Ovary (tissue), 10 donors: ENCODE measurements at regions of chr13 and their contacts with region 1.

Region 1: DNA sequence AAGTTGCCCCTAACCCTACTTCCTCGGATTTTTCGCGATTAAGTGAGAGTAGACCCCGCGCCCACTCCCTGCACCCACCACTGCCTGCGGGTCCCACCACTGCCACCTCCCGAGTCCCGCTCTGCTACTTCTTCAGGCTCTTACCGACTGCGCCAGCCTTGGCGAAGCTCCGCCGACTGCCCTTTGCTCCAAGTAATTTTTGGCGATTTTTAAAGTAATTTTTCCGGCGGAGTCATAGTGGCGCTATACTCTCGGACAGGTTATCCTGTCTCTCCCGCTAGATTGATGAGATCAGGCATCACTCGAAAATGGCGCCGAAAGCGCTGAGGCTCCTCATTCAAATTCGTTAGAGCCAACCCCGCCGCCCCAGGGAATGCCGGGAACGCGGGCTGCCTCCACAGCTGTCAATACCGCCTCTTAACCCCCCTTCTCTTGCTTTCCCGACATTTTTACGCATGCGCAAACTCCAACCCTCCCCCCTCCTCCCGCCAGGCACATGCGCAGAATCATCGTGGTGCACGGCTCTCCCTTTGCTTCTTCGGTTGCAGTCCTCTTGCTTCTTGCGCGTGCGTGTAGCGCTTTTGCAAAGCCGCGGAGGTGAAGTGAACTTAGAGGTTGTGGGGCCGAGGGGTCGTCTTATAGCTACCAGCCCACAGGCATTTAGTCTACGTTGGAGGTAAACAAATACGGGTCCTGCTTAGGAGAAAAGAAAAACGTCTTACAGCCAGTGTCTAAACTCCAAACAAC is 66.6 kb downstream of the KCNRG start:
- DNase-seq: peak; percentile 95 to 98 (median 97)
- H3K4me3 ChIP-seq: peak overlapping the region; percentile 53
- H3K27ac ChIP-seq: peak overlapping the region in 1 of 2 donors; percentile 23
- H3K4me1 ChIP-seq: no peaks in the 10 kb centered on the region
- H3K27me3 ChIP-seq: no peaks in the 10 kb centered on the region
- CTCF ChIP-seq: peak in 1 of 3 donors; percentile 8
- EP300 ChIP-seq: no peak
- POLR2A ChIP-seq: no peak

Region 2: DNA sequence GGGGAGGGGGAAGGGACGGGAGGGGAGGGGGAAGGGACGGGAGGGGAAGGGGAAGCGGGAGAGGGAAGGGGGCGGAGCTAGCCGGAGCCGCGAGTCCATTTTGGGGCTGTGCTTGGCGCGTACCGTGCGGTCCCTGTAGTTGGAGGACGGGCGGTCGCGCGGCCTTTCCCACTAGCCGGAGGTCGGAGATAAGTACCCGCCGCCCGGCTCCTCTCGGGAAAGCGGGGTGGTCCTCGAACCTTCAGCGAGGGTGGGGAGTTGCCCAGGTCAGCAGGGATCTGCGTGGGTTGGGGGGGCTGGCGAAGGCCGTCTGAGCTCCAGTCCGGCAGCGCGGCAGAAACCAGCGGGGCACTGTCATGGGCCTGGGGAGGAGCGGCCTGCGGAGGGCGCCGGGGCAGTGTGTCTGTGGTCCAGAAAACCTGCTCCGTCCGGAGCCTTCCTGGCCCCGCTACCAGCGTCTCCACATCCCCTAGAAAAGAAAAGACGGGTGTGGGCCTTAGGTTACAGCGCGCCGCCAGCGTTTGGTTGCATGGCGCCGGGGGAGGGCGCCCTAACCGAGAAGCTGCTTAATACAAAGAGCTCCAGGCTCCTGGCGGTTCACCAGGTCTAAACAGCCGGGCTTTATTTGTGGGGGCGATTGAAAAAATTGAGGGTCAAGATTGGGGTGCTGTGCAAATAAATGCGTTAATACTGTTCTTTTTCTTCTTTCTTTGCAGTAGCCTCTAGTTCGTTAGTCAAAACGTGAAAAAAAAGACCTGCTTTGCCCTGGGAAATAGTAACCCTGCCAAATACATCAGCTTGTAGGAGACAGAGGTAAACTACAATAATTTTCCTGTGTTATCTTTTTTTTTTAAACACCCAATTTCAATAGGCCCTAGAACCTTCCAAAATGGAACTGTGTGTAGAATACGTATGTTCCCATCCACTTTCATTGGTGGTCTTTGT is 84.6 kb before region 1 on chr13 and contains the start of gene TRIM13:
- intact Hi-C with region 1: loop called in 2 of 4 experiments (anchors 2 to 5 kb)
- DNase-seq: peak; percentile 88 to 93 (median 91)
- H3K4me3 ChIP-seq: peak within 1 kb of the TSS; percentile 90
- H3K27ac ChIP-seq: peak within 1 kb of the TSS; percentile 97 to 98
- H3K4me1 ChIP-seq: peaks cover 3% of the 10 kb centered on the region
- H3K27me3 ChIP-seq: no peaks in the 10 kb centered on the region
- CTCF ChIP-seq: peak; percentile 50 to 71 (median 58)
- EP300 ChIP-seq: no peak
- POLR2A ChIP-seq: peak; percentile 53
- total RNA-seq, gene TRIM13: 14.5 to 27.9 (median 25.5) TPM

Region 3: DNA sequence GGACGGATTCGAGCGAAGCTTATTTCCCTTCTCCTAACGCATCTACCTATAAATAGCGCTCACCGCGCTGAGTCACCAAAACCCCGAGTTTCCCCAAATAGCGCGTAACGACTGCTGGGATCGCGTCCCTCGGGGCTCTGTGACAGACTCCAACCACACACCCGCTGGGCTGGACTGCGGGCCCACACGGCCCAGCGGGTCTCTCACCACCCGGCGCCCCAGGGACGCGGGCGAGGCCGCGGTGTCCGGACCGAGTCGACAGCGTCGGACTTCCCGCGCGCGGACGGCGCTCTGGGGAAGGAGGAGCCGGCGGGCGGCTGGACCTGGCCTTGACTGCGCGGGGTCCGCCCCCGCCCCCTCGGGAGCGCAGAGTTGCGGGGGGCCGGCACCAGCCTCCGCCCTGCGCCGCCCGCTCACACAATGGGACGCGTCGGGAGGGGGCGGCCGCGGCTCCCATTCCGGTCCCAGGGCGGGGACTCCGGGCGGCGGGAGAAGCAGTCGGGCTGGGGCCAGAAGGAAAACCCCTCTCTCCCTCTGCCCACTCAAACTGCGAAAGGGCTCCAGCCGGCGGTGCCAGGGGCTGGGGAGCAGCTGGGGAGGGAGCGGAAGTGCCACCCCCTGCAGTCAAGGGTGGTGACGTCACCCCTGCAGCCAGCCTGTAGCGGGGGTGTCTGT is 42.1 kb after region 1 on chr13:
- intact Hi-C with region 1: loop called in 2 of 4 experiments (anchors 2 to 5 kb)
- DNase-seq: peak in 1 of 5 donors; percentile 80
- H3K4me3 ChIP-seq: peak overlapping the region; percentile 83
- H3K27ac ChIP-seq: peak overlapping the region; percentile 70 to 97
- H3K4me1 ChIP-seq: peaks cover 2% of the 10 kb centered on the region
- H3K27me3 ChIP-seq: peaks cover 4% of the 10 kb centered on the region
- CTCF ChIP-seq: peak in 2 of 3 donors; percentile 11 to 24
- EP300 ChIP-seq: peak; percentile 34
- POLR2A ChIP-seq: peak; percentile 82

Region 4: DNA sequence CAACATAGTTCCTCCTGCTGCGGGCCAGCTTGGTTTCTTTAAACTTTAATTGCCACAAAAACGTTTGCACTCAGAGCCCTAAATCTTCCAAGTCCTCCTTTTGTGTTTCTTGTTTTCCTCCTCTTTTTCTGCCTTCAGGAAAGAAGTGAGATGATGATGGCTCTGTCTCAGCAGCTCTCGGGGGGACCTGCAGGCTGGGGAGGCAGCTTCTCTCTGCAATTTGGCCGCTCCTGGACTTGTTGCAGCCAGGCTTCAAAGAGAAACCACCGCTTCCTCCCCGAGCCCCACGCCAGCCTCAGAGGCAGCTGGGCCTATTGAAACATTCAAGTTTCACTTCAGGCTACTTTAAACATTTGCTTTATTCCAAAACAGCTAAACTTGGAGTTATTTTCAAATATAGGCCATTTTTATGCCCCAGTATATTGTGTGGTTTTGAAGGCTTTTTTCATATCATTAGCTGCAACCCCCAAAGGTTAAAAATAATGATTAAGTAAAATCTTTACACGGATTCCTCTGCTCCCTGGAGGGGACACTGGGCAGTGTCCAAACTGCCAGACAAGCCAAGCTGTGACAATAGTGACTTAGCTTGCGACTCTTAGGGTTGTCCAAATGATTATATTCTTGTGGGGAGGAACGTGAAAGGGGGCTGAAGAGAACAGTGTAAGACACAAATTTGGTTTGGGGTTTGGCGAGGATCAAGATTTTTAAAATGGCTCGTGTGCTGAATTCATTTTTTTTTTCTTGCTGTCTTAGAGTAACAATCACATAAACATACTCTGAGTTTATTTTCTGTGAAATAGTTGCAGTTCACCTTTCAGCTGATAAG is 430.8 kb after region 1 on chr13:
- intact Hi-C with region 1: loop called in 1 of 4 experiments (anchors 10 kb)
- DNase-seq: peak; percentile 46 to 61 (median 53)
- H3K4me3 ChIP-seq: peak overlapping the region; percentile 28
- H3K27ac ChIP-seq: peak overlapping the region in 1 of 2 donors; percentile 55
- H3K4me1 ChIP-seq: peaks cover 5% of the 10 kb centered on the region
- H3K27me3 ChIP-seq: no peaks in the 10 kb centered on the region
- CTCF ChIP-seq: no peak
- EP300 ChIP-seq: no peak
- POLR2A ChIP-seq: no peak

Region 5: GRCh38 chr13:50529154-50529882 is 447.5 kb after region 1 on chr13:
- intact Hi-C with region 1: loop called in 1 of 4 experiments (anchors 5 kb)
- DNase-seq: peak; percentile 65 to 84 (median 80)
- H3K4me3 ChIP-seq: peak overlapping the region; percentile 16
- H3K27ac ChIP-seq: peak overlapping the region in 1 of 2 donors; percentile 59
- H3K4me1 ChIP-seq: peaks cover 2% of the 10 kb centered on the region
- H3K27me3 ChIP-seq: no peaks in the 10 kb centered on the region
- CTCF ChIP-seq: no peak
- EP300 ChIP-seq: no peak
- POLR2A ChIP-seq: no peak

Region 6: GRCh38 chr13:50843257-50844083 is 761.6 kb after region 1 on chr13 and contains the start of gene DLEU7:
- intact Hi-C with region 1: no loop called
- DNase-seq: peak in 1 of 5 donors; percentile 9
- H3K4me3 ChIP-seq: peak within 1 kb of the TSS; percentile 7
- H3K27ac ChIP-seq: no peak within 1 kb of the TSS
- H3K4me1 ChIP-seq: peaks cover 5% of the 10 kb centered on the region
- H3K27me3 ChIP-seq: no peaks in the 10 kb centered on the region
- CTCF ChIP-seq: no peak
- EP300 ChIP-seq: no peak
- POLR2A ChIP-seq: no peak
- total RNA-seq, gene DLEU7: 0.12 to 0.65 (median 0.28) TPM in 4 of 7 donors, not detected in the others

Region 7: DNA sequence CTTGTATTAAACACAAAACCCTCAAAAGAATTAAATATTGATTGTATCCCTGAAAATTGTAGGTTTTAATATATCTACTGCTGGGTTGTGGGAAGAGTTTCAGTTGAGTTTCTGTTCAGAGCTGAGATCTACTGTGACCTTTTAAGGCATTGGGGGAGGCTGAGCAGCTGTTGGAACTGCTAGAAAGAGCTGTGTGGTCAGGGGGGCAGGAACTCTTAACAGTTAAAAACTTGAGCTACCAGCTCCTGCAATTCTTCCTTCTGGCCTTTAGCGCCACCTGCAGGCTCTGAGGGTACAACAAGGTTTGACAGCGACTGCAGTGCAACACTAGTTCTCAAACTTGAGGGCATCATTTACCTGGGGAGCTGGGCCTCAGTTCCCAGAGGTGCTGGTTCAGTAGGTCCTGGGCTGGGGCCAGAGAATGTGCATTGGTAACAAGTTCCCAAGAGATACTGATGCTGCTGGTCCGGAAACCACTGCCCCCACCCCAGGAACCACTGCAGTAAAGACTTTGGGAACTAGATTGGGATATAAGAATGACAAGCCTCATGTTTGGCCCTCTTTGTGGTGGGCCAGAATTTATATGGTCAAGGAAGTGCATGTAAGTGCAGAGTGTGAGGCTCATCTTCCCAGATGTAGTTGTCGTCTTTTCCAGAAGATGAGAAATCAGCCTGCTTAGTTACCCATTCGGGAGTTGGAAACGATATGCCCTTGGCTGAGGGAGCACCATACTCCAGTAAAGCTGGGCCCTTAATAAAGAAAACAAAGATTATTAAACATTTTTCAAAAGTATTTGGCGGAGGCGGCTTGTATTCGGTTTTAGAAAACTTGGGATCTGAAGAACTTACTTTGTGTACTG is 830.3 kb after region 1 on chr13:
- intact Hi-C with region 1: loop called in 2 of 4 experiments (anchors 5 to 10 kb)
- DNase-seq: peak; percentile 76 to 89 (median 85)
- H3K4me3 ChIP-seq: no peak overlapping the region
- H3K27ac ChIP-seq: no peak overlapping the region
- H3K4me1 ChIP-seq: peaks cover 7% of the 10 kb centered on the region
- H3K27me3 ChIP-seq: no peaks in the 10 kb centered on the region
- CTCF ChIP-seq: peak; percentile 44 to 80 (median 75)
- EP300 ChIP-seq: no peak
- POLR2A ChIP-seq: no peak